B cell (primary cell): ENCODE measurements at regions of chr12 and their contacts with region 1.

Region 1: DNA sequence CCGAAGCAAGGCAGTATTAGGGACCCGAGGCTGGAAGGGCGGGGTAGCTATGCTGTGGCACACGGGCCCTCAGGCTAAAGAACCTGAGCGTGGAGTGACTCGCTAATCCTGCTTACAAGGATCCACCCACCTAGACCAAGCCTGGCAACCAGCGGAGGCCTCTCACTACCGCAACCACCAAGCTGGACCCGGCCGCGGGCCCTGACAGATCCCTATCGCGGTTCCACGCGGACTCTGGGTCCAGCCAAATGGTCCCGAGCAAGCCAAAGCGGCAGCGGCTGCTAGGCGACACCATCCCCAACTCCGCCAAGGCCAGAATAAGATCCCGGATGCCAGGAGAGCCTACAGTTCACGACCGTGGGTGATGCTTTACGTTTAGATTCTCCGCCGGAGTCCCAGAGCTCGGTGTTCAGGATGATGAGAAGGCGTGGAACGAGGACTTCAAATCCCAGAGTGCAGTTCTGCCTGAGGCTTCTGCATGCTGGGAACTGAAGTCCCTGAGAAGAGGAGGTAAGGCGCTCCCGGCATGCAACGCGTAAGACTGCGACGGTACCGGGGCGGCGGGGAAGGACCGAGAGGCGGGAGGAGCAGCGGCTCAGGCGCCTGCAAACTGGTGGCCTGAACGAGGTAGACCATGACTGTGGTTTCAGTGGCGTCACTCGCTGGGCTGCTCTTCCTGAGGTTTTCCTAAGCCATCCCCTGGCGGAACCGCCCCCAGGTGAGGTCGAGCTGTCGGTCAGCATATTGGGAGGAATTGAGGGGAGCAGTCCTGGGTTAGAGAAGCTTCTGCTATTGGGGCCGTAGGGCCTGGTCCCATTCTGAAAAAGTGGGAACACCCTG is at the starts of genes CEP290 and TMTC3:
- DNase-seq: peak; percentile 96
- ATAC-seq: peak; percentile 93
- H3K4me3 ChIP-seq: peak within 1 kb of the TSS; percentile 74 to 95 (median 82)
- H3K4me3 Mint-ChIP-seq: peak within 1 kb of the TSS; percentile 92
- H3K27ac ChIP-seq: peak within 1 kb of the TSS; percentile 74 to 79
- H3K27ac Mint-ChIP-seq: peak within 1 kb of the TSS; percentile 92
- H3K4me1 ChIP-seq: peaks cover 12% of the 10 kb centered on the region in 2 donors
- H3K4me1 Mint-ChIP-seq: peaks cover 27% of the 10 kb centered on the region
- H3K27me3 ChIP-seq: no peaks in the 10 kb centered on the region
- H3K27me3 Mint-ChIP-seq: no peaks in the 10 kb centered on the region
- CTCF ChIP-seq: no peak
- total RNA-seq, gene CEP290: 27.3 and 31.0 TPM in 2 replicates
- total RNA-seq, gene TMTC3: 8.9 and 10.1 TPM in 2 replicates

Region 2: DNA sequence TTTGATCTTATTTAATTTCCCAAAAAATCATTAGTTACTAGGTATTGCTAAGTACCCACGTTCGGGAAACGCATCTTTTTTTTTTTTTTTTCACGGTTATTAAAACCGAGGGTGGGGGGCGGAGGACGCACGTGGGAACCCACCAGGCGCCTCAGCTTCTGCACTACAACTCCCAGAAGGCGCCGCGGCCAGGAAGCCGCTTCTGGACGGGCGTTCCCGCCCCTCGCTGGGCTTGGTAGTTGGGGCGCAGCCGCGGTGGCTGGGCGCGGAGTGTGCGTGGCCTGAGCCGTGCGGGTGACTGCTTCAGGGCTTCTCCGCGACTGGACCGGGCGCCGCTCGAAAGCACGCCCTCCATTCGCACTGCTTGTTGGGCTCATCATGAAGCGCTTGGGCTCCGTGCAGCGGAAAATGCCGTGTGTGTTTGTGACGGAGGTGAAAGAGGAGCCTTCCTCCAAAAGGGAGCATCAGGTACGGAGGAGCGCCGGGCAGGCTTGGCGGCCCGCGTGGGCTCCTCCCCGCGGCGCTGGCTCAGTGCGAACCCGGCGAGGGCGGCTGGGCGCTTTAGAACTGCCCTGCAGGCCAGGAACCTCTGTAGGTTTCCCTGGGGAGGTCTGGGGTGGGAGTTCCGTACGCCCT is 106.6 kb before region 1 on chr12:
- CTCF ChIA-PET with region 1: no interaction called
- POLR2A ChIA-PET with region 1: interaction called, 3 read pairs
- intact Hi-C with region 1: loop called (anchors 1 kb)
- DNase-seq: peak; percentile 88
- ATAC-seq: peak; percentile 97
- H3K4me3 ChIP-seq: peak overlapping the region; percentile 62 to 93 (median 90)
- H3K4me3 Mint-ChIP-seq: peak overlapping the region; percentile 99
- H3K27ac ChIP-seq: peak overlapping the region; percentile 47 to 74
- H3K27ac Mint-ChIP-seq: peak overlapping the region; percentile 92
- H3K4me1 ChIP-seq: peaks cover 16 to 17% of the 10 kb centered on the region in 2 donors
- H3K4me1 Mint-ChIP-seq: peaks cover 30% of the 10 kb centered on the region
- H3K27me3 ChIP-seq: no peaks in the 10 kb centered on the region
- H3K27me3 Mint-ChIP-seq: no peaks in the 10 kb centered on the region
- CTCF ChIP-seq: no peak

Region 3: DNA sequence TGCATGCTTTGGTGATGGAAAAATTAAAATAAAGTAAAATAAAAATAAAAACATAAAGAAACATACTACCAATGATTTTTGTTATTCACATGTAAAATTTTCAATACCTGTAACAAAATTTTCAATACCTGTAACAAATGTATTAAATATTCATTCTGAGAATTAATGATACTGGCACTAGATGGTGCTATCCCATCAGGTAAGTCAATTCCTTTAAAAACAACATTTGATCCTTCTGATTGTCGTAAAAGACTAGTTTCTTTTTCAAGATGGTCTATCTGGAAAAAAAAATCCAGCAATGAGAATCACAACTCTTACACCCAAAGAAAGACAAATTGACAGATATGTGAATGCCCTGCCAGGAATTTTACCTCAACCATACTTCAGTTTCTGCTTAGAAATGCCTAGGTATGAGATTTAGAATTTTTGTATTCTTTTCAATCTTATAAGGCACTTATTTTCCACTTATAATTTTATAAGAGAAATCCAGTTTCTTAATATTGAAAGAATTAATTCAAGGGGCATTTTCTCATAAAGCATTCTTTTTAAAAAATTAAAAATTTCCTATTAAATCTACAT is 30.8 kb before region 1 on chr12:
- CTCF ChIA-PET with region 1: no interaction called
- POLR2A ChIA-PET with region 1: no interaction called
- intact Hi-C with region 1: loop called (anchors 2 kb)
- DNase-seq: peak; percentile 26
- ATAC-seq: no peak
- H3K4me3 ChIP-seq: no peak overlapping the region
- H3K4me3 Mint-ChIP-seq: no peak overlapping the region
- H3K27ac ChIP-seq: no peak overlapping the region
- H3K27ac Mint-ChIP-seq: no peak overlapping the region
- H3K4me1 ChIP-seq: no peaks in the 10 kb centered on the region
- H3K4me1 Mint-ChIP-seq: peaks cover 2% of the 10 kb centered on the region
- H3K27me3 ChIP-seq: no peaks in the 10 kb centered on the region
- H3K27me3 Mint-ChIP-seq: no peaks in the 10 kb centered on the region
- CTCF ChIP-seq: peak; percentile 42

Region 4: GRCh38 chr12:88188180-88188579 is 46.2 kb after region 1 on chr12:
- CTCF ChIA-PET with region 1: no interaction called
- POLR2A ChIA-PET with region 1: no interaction called
- intact Hi-C with region 1: no loop called
- DNase-seq: no peak
- ATAC-seq: no peak
- H3K4me3 ChIP-seq: no peak overlapping the region
- H3K4me3 Mint-ChIP-seq: no peak overlapping the region
- H3K27ac ChIP-seq: no peak overlapping the region
- H3K27ac Mint-ChIP-seq: no peak overlapping the region
- H3K4me1 ChIP-seq: no peaks in the 10 kb centered on the region
- H3K4me1 Mint-ChIP-seq: no peaks in the 10 kb centered on the region
- H3K27me3 ChIP-seq: no peaks in the 10 kb centered on the region
- H3K27me3 Mint-ChIP-seq: no peaks in the 10 kb centered on the region
- CTCF ChIP-seq: no peak